Activated T-helper 1 cell treated with anti-CD3 and anti-CD28 coated beads, Interleukin-12 subunit alpha, Interleukin-12 subunit beta, Interleukin-2, Interleukin-4 antibody, amounts not matched to agents 30 ng/mL and 10 ng/mL and 1 ng/mL, durations not matched to agents 14 hours and 24 hours and 36 hours (primary cell): ENCODE measurements at regions of chr14 and their contacts with region 1.

Region 1: DNA sequence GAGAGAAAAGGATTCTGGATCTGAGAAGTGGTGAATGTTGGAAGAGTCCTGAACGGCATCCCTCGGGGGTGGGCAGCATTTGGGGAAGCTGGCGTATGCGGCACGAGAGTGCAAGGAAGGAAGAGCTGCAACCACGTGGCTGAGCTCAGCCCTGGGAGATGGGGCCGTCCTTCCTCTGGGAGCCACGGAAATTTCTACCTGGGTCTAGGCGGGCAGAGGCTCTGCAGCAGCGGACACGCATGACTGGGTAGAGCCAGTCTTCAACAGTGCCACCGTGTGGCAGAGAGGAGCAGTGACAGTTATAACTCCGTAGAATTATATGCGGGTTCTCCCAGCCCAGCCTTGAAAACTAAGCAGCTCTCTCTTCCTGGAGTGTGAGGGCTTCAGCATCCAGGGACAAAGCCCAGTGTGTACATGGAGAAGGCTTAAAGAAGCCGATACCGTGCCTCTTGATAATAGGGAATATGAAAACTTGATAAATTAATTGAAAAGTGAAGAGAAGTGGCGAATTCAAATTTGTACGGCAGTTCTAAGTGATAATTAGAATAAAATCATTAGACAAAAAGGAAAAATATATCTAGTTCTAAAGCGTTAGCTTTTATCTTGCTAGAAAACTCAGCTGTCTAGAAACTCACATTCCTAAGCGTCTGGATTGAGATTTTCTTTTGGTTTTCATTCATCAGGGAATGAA is 82.9 kb upstream of the STXBP6 start:
- DNase-seq: peak; percentile 25
- H3K4me3 Mint-ChIP-seq: no peak overlapping the region
- H3K27ac Mint-ChIP-seq: no peak overlapping the region
- H3K4me1 Mint-ChIP-seq: peaks cover 7% of the 10 kb centered on the region
- H3K27me3 Mint-ChIP-seq: peaks cover 17% of the 10 kb centered on the region

Region 2: DNA sequence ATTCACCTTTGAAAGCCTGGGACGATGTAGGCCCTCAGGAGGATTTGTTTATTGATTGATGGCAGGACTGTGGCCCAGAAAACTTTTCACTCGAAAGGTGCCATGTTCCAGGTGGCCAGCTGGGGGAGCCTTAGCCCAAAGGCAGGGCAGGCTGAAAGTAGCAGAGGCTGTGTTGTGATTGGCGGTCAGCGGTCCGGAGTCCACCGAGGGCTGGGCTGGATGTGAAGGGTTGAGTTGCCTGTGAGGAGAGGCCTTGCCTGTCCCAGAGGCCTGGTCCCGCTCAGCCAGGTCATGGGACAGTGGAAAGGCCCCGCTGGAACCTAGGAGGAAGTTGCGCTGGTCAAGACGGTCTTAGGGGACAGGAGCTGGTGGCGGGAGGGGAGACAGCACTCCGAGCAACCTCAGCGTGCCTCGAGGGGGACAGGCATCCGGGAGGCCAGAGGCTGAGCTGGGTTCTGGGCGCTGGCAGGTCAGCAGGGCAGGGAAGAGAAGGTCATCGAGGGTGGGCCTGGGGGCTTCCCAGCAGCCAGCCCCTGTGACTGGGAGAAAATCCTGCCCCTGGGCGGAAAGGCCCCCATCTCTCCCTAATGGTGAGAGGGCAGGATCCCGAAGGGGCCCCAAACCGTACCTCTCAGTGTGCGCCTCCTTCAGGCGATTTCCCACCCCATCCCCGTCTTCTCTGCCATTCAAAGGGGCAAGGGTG is 651.1 kb before region 1 on chr14:
- intact Hi-C with region 1: loop called (anchors 5 kb)
- DNase-seq: peak; percentile 34
- H3K4me3 Mint-ChIP-seq: peak overlapping the region; percentile 61
- H3K27ac Mint-ChIP-seq: peak overlapping the region; percentile 57
- H3K4me1 Mint-ChIP-seq: peaks cover 22% of the 10 kb centered on the region
- H3K27me3 Mint-ChIP-seq: no peaks in the 10 kb centered on the region

Region 3: DNA sequence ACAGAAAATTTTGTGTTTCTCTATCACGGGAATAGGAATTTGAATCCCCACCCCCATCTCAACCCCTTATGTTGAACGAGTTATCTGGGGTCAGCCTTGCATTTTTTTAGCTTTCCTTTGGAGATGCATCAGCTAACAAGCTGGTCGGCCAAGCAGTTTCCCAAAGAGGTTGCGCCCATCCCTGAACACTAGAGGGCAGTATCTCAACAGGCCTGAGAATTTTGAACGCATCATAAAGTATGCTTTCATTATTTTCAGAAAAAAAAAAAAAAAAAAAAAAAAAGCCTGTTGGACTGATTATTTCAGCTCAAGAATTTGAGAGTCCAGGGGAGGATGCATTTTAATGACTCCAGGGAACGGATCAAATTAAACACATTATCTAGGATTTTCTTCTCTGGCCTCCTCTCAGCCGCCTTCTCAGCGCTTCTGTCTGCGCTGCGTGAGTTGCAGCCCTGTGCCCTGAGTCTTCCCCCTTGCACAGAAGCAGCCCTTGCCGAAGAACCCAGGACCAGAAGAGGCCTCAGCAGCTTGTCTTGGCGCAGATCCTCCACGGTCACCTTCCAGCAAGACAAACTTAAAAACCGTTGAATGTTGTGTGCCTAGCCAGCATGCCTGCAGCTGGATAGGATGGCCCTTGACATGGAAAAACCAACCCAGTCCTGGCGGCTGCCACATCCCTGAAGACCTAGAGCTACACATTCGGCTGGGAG is 422.3 kb before region 1 on chr14:
- intact Hi-C with region 1: loop called (anchors 1 kb)
- DNase-seq: peak; percentile 50
- H3K4me3 Mint-ChIP-seq: no peak overlapping the region
- H3K27ac Mint-ChIP-seq: no peak overlapping the region
- H3K4me1 Mint-ChIP-seq: peaks cover 6% of the 10 kb centered on the region
- H3K27me3 Mint-ChIP-seq: peaks cover 7% of the 10 kb centered on the region

Region 4: DNA sequence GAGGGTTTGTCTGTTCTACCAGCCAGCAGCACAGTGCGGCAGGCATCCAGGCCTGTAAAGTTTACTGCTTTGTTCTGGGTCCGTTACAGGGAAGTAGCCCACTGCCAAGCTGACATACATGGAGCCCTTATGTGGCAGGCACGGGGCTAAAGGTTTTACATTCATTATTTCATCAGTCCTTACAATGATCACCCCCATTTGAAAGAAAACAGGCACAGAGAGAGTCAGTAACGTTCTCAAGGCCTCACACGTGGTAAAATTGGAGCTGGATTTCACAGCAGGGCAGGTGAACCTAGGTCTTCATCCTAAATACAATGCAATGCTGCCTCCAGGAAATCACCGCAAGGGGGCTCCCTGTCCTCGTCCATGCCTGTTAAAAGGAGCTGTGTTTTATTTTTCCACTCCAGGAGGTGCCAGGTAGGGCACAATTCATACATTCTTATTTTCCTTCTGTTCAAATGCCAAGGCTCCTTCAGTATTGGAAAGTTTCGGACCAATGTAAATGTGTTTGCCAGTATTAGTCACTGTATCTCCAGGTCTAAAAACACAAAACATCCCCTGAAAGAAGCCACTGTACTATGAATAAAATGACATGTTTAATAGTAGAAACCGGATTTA is 326.7 kb before region 1 on chr14:
- intact Hi-C with region 1: loop called (anchors 1 kb)
- DNase-seq: peak; percentile 5
- H3K4me3 Mint-ChIP-seq: no peak overlapping the region
- H3K27ac Mint-ChIP-seq: no peak overlapping the region
- H3K4me1 Mint-ChIP-seq: no peaks in the 10 kb centered on the region
- H3K27me3 Mint-ChIP-seq: peaks cover 5% of the 10 kb centered on the region

Region 5: DNA sequence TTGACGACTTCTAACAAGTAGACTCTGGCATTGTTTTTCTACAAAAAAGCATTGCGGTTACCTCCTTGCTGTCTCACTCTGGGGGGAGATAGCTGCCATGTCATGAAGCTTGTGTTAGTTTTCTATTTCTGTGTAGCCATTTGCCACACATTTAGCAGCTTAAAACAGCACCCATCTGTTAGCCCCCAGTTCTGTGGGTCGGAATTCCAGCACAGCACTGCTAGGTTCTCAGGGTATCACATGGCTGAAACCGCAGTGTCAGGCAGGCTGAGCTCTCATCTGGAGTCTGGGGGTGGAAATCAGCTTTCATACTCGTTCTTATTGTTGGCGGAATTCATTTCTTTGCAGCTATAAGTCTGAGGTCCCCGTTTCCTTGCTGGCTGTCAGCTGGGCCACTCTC is 63.0 kb before region 1 on chr14:
- intact Hi-C with region 1: no loop called
- DNase-seq: no peak
- H3K4me3 Mint-ChIP-seq: no peak overlapping the region
- H3K27ac Mint-ChIP-seq: no peak overlapping the region
- H3K4me1 Mint-ChIP-seq: no peaks in the 10 kb centered on the region
- H3K27me3 Mint-ChIP-seq: peaks cover 2% of the 10 kb centered on the region

Region 6: DNA sequence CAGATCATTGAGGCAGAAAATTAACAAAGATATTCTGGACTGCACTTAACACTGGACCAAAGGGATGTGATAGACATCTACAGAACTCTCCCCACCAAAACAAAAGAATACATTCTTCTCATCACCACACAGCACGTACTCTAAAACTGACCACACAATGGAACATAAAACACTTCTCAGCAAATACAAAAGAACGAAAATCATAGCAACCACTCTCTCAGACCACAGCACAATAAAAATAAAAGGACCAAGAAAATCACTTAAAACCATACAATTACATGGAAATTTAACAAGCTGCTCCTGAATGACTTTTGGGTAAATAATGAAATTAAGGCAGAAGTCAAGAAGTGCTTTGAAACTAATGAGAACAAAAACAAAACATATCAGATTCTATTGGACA is 171.1 kb after region 1 on chr14:
- intact Hi-C with region 1: no loop called
- DNase-seq: no peak
- H3K4me3 Mint-ChIP-seq: no peak overlapping the region
- H3K27ac Mint-ChIP-seq: no peak overlapping the region
- H3K4me1 Mint-ChIP-seq: no peaks in the 10 kb centered on the region
- H3K27me3 Mint-ChIP-seq: peaks cover 1% of the 10 kb centered on the region